ENCODE measurements at regions of chr12 and their contacts with region 1.

Region 1: GRCh38 chr12:98397316-98398105 is 117.9 kb upstream of the TMPO start:
- DNase-seq: peak; percentile 68 to 88 (median 70)
- H3K4me3 ChIP-seq: peak overlapping the region; percentile 57
- H3K4me3 Mint-ChIP-seq: peak overlapping the region; percentile 54 to 91 (median 87)
- H3K27ac ChIP-seq: no peak overlapping the region
- H3K27ac Mint-ChIP-seq: peak overlapping the region; percentile 6 to 96 (median 86)
- H3K4me1 ChIP-seq: peaks cover 7% of the 10 kb centered on the region
- H3K4me1 Mint-ChIP-seq: peaks cover 24 to 29% (median 29%) of the 10 kb centered on the region in 3 donors
- H3K27me3 ChIP-seq: no peaks in the 10 kb centered on the region
- H3K27me3 Mint-ChIP-seq: no peaks in the 10 kb centered on the region

Region 2: DNA sequence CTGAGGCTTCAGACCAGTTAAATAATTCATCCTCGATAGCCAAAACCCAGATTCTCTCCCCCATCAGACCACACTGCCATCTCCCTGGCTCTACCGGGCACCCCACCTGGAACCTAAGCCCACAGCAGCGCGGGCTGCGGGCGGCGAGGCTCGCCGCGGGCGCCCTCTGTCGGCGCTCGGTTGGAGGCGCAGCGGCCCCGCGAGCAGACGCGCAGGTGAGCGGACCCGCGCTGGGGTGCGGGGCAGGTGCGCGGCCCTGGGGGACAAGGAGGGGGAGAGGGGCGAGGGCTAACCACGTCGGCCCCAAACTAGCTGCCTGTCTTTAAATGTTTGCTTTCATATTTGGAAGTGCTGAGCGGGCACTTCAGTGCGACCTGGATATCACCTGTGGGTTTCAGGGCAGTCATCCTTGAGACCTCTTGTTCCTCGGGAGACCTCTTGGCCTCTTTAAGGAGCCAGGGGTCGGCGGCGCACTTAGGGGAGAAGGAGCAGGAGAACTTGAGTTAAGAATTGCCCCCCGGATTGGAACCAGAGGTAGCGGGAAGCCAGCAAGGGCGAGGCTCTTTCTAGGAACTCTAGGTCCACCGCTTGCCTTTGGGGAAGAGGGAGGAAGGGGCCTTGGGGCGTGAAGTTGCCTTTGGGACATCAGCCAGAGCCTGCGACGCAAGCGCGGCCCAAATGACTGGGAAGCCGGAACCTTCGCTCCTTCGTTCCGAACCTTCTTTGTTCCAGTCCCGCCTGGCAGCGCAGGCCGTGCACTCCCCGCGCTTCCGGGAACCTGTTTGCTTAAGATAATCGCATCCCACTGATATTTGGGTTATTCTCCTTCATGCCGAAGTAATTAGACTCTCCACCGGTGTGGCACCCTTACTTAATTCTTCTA is 1411.8 kb before region 1 on chr12:
- CTCF ChIA-PET with region 1: interaction called, 11 read pairs
- POLR2A ChIA-PET with region 1: no interaction called
- DNase-seq: peak; percentile 9 to 49 (median 38)
- H3K4me3 ChIP-seq: peak overlapping the region; percentile 44
- H3K4me3 Mint-ChIP-seq: peak overlapping the region; percentile 74 to 91 (median 84)
- H3K27ac ChIP-seq: no peak overlapping the region
- H3K27ac Mint-ChIP-seq: no peak overlapping the region
- H3K4me1 ChIP-seq: peaks cover 4% of the 10 kb centered on the region
- H3K4me1 Mint-ChIP-seq: peaks cover 5 to 12% (median 9%) of the 10 kb centered on the region in 3 donors
- H3K27me3 ChIP-seq: peaks cover 6% of the 10 kb centered on the region
- H3K27me3 Mint-ChIP-seq: peaks cover 27 to 37% of the 10 kb centered on the region in 2 donors

Region 3: GRCh38 chr12:97148941-97149559 is 1248.5 kb before region 1 on chr12:
- CTCF ChIA-PET with region 1: interaction called, 14 read pairs
- POLR2A ChIA-PET with region 1: no interaction called
- DNase-seq: peak; percentile 1 to 45 (median 5)
- H3K4me3 ChIP-seq: no peak overlapping the region
- H3K4me3 Mint-ChIP-seq: no peak overlapping the region
- H3K27ac ChIP-seq: no peak overlapping the region
- H3K27ac Mint-ChIP-seq: peak overlapping the region in 1 of 8 donors; percentile 26
- H3K4me1 ChIP-seq: no peaks in the 10 kb centered on the region
- H3K4me1 Mint-ChIP-seq: peaks cover 0 to 2% (median 0%) of the 10 kb centered on the region in 3 donors
- H3K27me3 ChIP-seq: no peaks in the 10 kb centered on the region
- H3K27me3 Mint-ChIP-seq: peaks cover 3 to 16% of the 10 kb centered on the region in 2 donors

Measured in CD8-positive, alpha-beta memory T cell (primary cell).